ENCODE measurements at regions of chr10 and their contacts with region 1.

Region 1: DNA sequence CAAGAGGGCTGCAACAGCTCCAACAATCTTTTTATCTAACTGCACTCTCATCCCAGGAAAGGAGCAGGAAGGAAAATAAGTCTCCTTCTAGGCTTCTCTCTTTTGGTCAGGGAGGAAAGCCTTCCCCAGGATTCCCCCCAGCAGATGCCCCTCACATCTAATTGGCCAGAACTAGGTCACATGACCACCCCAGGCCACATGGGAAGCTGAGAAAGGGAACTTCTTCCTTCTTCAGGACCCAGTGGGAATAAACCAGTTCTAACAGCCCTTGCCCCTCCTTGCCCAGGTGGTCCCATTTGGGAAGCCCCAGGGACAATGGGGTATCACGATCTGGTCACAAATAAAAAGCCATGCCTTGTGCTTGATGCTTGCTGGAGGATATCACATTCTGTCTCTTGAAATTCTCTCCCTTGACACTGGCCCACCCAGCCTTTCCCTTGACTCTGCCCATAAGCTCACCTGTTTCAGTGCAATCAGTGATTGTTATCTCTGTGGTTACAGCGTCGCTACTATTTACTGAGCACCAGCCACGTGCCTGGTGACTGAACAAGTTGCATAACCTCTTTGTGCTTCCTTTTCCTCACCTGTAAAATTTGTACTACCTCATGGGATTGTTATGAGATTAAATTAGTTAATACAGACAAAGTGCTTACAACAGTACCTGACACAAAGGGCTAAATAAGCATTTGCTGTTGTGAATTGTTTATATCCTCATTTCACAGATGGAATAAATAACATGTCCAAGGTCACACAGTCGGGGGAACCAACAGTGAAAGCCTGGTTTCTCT is 9.0 kb upstream of the TACR2 start:
- DNase-seq: peak in 1 of 2 donors; percentile 2
- ATAC-seq: no peak
- H3K4me3 ChIP-seq: no peak overlapping the region
- H3K27ac ChIP-seq: peak overlapping the region in 1 of 4 donors; percentile 30
- H3K4me1 ChIP-seq: peaks cover 0 to 5% of the 10 kb centered on the region in 2 donors
- H3K27me3 ChIP-seq: no peaks in the 10 kb centered on the region
- CTCF ChIP-seq: no peak
- POLR2A ChIP-seq: no peak

Region 2: GRCh38 chr10:69033256-69033655 is 392.4 kb before region 1 on chr10:
- in situ Hi-C with region 1: no loop called
- intact Hi-C with region 1: no loop called
- DNase-seq: no peak
- ATAC-seq: no peak
- H3K4me3 ChIP-seq: no peak overlapping the region
- H3K27ac ChIP-seq: no peak overlapping the region
- H3K4me1 ChIP-seq: no peaks in the 10 kb centered on the region
- H3K27me3 ChIP-seq: no peaks in the 10 kb centered on the region
- CTCF ChIP-seq: no peak
- POLR2A ChIP-seq: no peak

Region 3: GRCh38 chr10:69408318-69409175 is 17.2 kb before region 1 on chr10:
- in situ Hi-C with region 1: no loop called
- intact Hi-C with region 1: loop called (anchors 1 kb)
- DNase-seq: peak; percentile 85 to 92
- ATAC-seq: peak; percentile 73 to 81
- H3K4me3 ChIP-seq: peak overlapping the region; percentile 51 to 67 (median 59)
- H3K27ac ChIP-seq: peak overlapping the region; percentile 87 to 99 (median 90)
- H3K4me1 ChIP-seq: peaks cover 17 to 31% of the 10 kb centered on the region in 2 donors
- H3K27me3 ChIP-seq: no peaks in the 10 kb centered on the region
- CTCF ChIP-seq: peak; percentile 19 to 91 (median 64)
- POLR2A ChIP-seq: peak; percentile 35 to 43

Region 4: DNA sequence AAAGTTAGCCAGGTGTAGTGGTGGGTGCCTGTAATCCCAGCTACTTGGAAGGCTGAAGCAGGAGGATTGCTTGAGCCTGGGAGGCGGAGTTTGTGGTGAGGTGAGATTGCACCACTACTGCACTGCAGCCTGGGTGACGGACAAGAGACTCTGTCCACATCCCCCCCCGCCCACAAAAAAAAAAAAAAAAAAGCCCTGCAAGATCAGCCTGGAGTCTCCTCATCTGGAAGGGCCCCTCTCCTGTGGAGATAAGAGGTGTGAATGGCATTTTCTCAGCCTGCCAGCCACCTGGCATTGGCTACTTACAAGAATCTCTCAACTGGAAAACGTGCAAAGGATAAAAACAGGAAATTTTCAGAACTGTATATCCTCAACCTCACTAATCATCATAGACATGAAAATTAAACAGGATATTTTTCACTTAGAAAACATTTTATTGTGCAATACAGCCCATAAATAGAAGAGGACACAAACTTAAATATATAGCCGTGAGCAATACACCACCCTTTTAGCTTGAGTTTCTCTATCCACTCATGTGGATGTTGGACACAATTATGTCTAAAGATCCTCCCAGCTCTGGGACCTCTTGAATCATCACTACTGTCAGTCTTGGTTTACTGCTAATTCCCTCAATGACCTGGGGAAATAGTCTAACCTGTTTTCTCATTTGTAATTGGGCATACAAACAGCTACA is 14.3 kb after region 1 on chr10:
- in situ Hi-C with region 1: no loop called
- intact Hi-C with region 1: no loop called
- DNase-seq: peak in 1 of 2 donors; percentile 73
- ATAC-seq: peak; percentile 79 to 92
- H3K4me3 ChIP-seq: no peak overlapping the region
- H3K27ac ChIP-seq: peak overlapping the region; percentile 77 to 91 (median 85)
- H3K4me1 ChIP-seq: peaks cover 20 to 29% of the 10 kb centered on the region in 2 donors
- H3K27me3 ChIP-seq: no peaks in the 10 kb centered on the region
- CTCF ChIP-seq: no peak
- POLR2A ChIP-seq: no peak

Region 5: GRCh38 chr10:69451209-69451783 is 25.6 kb after region 1 on chr10 and contains the start of gene TSPAN15:
- in situ Hi-C with region 1: no loop called
- intact Hi-C with region 1: loop called (anchors 2 kb)
- DNase-seq: peak; percentile 86 to 89
- ATAC-seq: peak; percentile 77 to 82
- H3K4me3 ChIP-seq: peak within 1 kb of the TSS; percentile 83 to 95 (median 93)
- H3K27ac ChIP-seq: peak within 1 kb of the TSS; percentile 87 to 95 (median 90)
- H3K4me1 ChIP-seq: peaks cover 49 to 59% of the 10 kb centered on the region in 2 donors
- H3K27me3 ChIP-seq: no peaks in the 10 kb centered on the region
- CTCF ChIP-seq: no peak
- POLR2A ChIP-seq: peak; percentile 94
- total RNA-seq, gene TSPAN15: 7.9 to 21.0 (median 11.8) TPM

Region 6: DNA sequence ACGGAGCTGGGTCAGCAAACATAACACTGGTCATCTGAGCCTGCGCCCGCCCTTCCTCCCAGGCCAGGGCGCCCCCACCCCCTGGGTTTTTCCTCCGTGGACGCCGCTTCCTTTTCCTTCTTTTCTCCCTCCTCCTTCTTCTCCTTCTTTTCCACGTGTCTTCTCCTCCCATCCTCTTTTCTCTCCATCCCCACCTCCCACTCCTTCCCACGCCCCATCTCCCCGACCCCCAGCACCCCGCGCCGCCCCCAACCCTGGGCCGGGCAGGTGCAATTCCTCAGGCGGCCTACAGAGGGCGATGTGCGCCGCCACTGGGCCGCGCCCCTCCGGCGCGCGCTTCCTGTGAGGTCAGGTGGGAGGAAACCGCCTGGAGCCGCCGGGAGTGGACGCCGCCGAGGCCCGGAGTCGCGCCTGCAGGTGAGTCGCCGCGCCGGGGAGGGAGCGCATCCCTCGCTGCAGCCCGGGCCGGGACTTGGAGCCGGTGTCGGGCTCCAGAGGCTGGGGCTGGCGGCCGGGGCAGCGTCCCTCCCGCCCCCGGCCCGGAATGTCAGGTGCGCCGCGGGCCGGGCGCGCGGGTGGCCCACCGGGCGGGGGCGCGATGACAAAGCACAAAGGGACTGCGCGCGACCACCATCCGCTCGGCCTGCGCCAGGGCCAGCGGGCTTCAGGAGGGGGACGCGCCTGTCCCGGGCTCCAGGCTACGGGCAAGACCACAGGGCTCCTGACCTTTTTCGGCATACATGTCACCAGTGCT is 204.4 kb after region 1 on chr10 and contains the start of gene FAM241B:
- in situ Hi-C with region 1: loop called (anchors 10 to 25 kb)
- intact Hi-C with region 1: loop called (anchors 5 kb)
- DNase-seq: peak; percentile 18 to 43
- ATAC-seq: peak; percentile 56 to 89
- H3K4me3 ChIP-seq: peak within 1 kb of the TSS; percentile 33 to 63 (median 48)
- H3K27ac ChIP-seq: no peak within 1 kb of the TSS
- H3K4me1 ChIP-seq: peaks cover 0 to 4% of the 10 kb centered on the region in 2 donors
- H3K27me3 ChIP-seq: peaks cover under 1 to 11% (median 3%) of the 10 kb centered on the region in 3 donors
- CTCF ChIP-seq: peak; percentile 66 to 95 (median 88)
- POLR2A ChIP-seq: peak in 1 of 2 donors; percentile 50
- total RNA-seq, gene FAM241B: 1.1 to 2.6 (median 2.5) TPM in 3 of 4 donors, not detected in the other